ENCODE measurements at regions of chr2 and their contacts with region 1.

Region 1: GRCh38 chr2:105114551-105114950 is 76.7 kb downstream of the MRPS9 start:
- DNase-seq: peak in 3 of 14 experiments; percentile 43 to 56 (median 55)
- ATAC-seq: no peak
- H3K4me3 ChIP-seq: no peak overlapping the region
- H3K4me3 Mint-ChIP-seq: no peak overlapping the region
- H3K27ac ChIP-seq: no peak overlapping the region
- H3K27ac Mint-ChIP-seq: no peak overlapping the region
- H3K4me1 ChIP-seq: no peaks in the 10 kb centered on the region
- H3K4me1 Mint-ChIP-seq: no peaks in the 10 kb centered on the region
- H3K27me3 ChIP-seq: no peaks in the 10 kb centered on the region
- H3K27me3 Mint-ChIP-seq: no peaks in the 10 kb centered on the region
- CTCF ChIP-seq: peak; percentile 74

Region 2: GRCh38 chr2:105087273-105087672 is 27.3 kb before region 1 on chr2:
- CTCF ChIA-PET with region 1: no interaction called
- POLR2A ChIA-PET with region 1: no interaction called
- intact Hi-C with region 1: no loop called
- DNase-seq: no peak
- ATAC-seq: no peak
- H3K4me3 ChIP-seq: no peak overlapping the region
- H3K4me3 Mint-ChIP-seq: no peak overlapping the region
- H3K27ac ChIP-seq: no peak overlapping the region
- H3K27ac Mint-ChIP-seq: no peak overlapping the region
- H3K4me1 ChIP-seq: no peaks in the 10 kb centered on the region
- H3K4me1 Mint-ChIP-seq: peaks cover 19% of the 10 kb centered on the region
- H3K27me3 ChIP-seq: no peaks in the 10 kb centered on the region
- H3K27me3 Mint-ChIP-seq: no peaks in the 10 kb centered on the region
- CTCF ChIP-seq: no peak

Region 3: GRCh38 chr2:105156215-105156614 is 41.7 kb after region 1 on chr2:
- CTCF ChIA-PET with region 1: no interaction called
- POLR2A ChIA-PET with region 1: no interaction called
- intact Hi-C with region 1: no loop called
- DNase-seq: no peak
- ATAC-seq: no peak
- H3K4me3 ChIP-seq: no peak overlapping the region
- H3K4me3 Mint-ChIP-seq: no peak overlapping the region
- H3K27ac ChIP-seq: no peak overlapping the region
- H3K27ac Mint-ChIP-seq: no peak overlapping the region
- H3K4me1 ChIP-seq: no peaks in the 10 kb centered on the region
- H3K4me1 Mint-ChIP-seq: no peaks in the 10 kb centered on the region
- H3K27me3 ChIP-seq: peaks cover 5 to 7% of the 10 kb centered on the region in 2 experiments
- H3K27me3 Mint-ChIP-seq: peaks cover 45% of the 10 kb centered on the region
- CTCF ChIP-seq: no peak

Region 4: DNA sequence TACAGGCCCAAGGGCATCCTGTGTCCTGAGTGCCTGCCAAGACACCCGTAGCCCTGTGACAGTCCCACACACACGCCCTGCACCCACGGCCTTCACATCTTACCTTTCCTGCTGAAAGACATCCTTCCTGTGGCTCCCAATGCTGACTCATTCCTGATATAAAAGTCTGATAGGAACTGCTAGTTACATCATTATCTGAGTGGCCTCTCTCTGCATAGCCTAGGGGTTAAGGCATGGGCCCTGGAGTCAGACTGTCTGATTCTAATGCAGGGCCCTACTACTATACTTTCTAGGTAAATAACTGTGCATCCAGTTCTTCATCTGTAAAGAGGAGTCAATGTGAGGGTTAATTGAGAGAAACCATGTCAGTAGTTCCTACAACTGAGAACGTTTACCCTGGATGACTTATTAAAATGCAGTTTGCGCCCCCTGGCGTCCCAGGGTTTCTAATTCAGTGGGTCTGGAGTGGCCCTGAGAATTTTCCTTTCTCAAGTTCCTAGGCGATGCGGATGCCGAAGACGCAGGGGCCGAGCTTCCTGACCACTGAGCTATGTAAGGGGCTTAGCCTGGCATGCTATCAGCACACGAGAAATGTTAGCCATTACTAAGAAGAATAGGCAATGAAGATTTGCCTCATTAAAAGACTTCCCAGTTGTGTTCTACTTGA is 121.0 kb after region 1 on chr2:
- CTCF ChIA-PET with region 1: no interaction called
- POLR2A ChIA-PET with region 1: no interaction called
- intact Hi-C with region 1: loop called (anchors 1 to 2 kb)
- DNase-seq: peak; percentile 27 to 68 (median 46)
- ATAC-seq: no peak
- H3K4me3 ChIP-seq: no peak overlapping the region
- H3K4me3 Mint-ChIP-seq: no peak overlapping the region
- H3K27ac ChIP-seq: no peak overlapping the region
- H3K27ac Mint-ChIP-seq: no peak overlapping the region
- H3K4me1 ChIP-seq: peaks cover 11% of the 10 kb centered on the region
- H3K4me1 Mint-ChIP-seq: peaks cover 8% of the 10 kb centered on the region
- H3K27me3 ChIP-seq: peaks cover 2 to 5% of the 10 kb centered on the region in 2 experiments
- H3K27me3 Mint-ChIP-seq: no peaks in the 10 kb centered on the region
- CTCF ChIP-seq: peak; percentile 63

Region 5: DNA sequence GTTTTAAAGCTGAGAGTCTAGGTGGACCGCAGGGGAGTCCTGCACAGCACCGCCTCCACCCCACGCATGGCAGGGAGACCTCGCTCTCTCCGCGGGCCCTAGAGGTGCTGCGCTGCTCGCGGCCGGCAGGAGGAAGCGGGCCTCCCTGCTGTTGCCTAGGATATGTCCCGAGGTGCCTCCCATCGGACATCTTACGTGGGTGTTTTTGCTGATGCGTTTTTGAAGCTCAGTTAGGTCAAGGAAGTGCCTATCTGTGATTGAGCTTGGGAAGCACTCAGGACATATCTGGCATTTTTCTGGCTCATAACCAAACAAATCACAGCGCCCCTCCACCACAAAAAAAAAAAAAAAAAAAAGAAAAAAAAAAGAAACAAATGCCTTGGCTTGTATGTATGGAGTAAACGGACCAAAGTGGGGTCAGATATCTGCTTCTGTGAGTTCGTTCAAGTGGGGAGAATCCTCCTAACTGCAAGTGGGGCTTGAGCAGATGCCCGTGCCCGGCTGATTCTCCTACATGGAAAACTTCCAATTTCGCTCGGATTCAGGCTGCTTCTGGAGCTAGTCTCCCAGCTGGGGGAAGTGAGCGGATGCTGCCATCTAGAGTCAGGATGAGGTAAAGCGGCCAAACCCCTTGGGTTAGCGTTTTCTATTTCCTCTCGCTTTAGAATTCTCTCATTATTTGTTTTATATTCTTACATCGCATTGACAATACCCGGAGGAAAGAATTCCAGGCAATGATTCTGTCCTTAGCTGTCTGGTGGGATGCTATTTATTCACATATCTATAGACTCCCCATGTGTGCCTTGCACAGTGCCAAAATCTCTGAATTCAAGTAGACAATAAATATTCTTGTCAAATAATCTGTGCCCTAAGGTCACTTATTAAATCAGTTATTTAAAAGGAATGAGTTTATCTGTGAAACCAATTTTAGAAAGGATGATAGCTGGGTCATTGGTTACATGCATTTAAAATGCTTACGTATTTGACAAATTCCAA is 1467.9 kb after region 1 on chr2:
- CTCF ChIA-PET with region 1: no interaction called
- POLR2A ChIA-PET with region 1: no interaction called
- intact Hi-C with region 1: loop called in 1 of 2 experiments (anchors 10 kb)
- DNase-seq: peak; percentile 31 to 76 (median 51)
- ATAC-seq: peak; percentile 88
- H3K4me3 ChIP-seq: peak overlapping the region; percentile 58
- H3K4me3 Mint-ChIP-seq: peak overlapping the region; percentile 91
- H3K27ac ChIP-seq: no peak overlapping the region
- H3K27ac Mint-ChIP-seq: no peak overlapping the region
- H3K4me1 ChIP-seq: peaks cover 10% of the 10 kb centered on the region
- H3K4me1 Mint-ChIP-seq: peaks cover 22% of the 10 kb centered on the region
- H3K27me3 ChIP-seq: peaks cover 17% of the 10 kb centered on the region in 2 experiments
- H3K27me3 Mint-ChIP-seq: peaks cover 57% of the 10 kb centered on the region
- CTCF ChIP-seq: peak; percentile 95